ENCODE measurements at regions of chr9 and their contacts with region 1.

Region 1: DNA sequence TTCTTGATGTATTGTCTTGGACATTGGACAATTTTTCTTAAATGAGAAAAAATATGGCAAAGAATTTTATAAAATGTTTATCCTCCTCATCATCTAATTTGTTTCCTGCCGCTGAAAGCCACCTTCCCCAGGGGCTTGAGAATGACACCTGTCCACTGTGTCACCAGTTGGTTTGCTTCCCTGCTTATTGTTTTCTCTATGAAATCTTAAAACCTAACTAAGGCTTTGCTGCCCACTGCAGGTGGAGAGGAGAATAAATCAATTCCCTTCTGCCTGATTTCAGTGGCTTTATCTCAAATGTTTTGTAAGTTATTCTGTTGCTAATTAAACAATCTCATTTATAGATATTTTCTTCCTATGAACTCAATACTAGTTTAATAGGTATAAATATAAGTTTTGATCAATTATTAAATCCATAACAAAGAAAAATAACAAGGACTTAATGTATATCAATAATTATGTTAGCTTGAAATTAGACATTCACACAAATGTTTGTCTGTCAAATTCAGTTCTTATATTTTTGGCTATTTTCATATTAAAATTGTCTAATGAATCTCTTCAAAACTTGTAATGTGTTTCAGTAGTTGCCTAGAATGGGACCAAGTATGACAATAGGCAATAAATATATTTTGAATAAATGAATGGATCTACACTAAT is 822.5 kb downstream of the PTPRD start:
- DNase-seq: no peak
- H3K4me3 ChIP-seq: no peak overlapping the region
- H3K27ac ChIP-seq: no peak overlapping the region
- H3K4me1 ChIP-seq: no peaks in the 10 kb centered on the region
- H3K27me3 ChIP-seq: no peaks in the 10 kb centered on the region
- CTCF ChIP-seq: peak in 2 of 3 experiments; percentile 59 to 73; a peak in 3 of 4 replicates
- EP300 ChIP-seq: no peak
- POLR2A ChIP-seq: no peak
- RAD21 ChIP-seq: peak; percentile 89 to 92

Region 2: GRCh38 chr9:9605681-9606080 is 184.7 kb before region 1 on chr9:
- CTCF ChIA-PET with region 1: interaction called, 68 read pairs
- POLR2A ChIA-PET with region 1: no interaction called
- DNase-seq: no peak
- H3K4me3 ChIP-seq: no peak overlapping the region
- H3K27ac ChIP-seq: no peak overlapping the region
- H3K4me1 ChIP-seq: peaks cover 0 to 4% (median 1%) of the 10 kb centered on the region in 4 experiments; a peak in 3 of 7 replicates
- H3K27me3 ChIP-seq: no peaks in the 10 kb centered on the region
- CTCF ChIP-seq: no peak
- EP300 ChIP-seq: no peak
- POLR2A ChIP-seq: no peak
- RAD21 ChIP-seq: no peak

Region 3: DNA sequence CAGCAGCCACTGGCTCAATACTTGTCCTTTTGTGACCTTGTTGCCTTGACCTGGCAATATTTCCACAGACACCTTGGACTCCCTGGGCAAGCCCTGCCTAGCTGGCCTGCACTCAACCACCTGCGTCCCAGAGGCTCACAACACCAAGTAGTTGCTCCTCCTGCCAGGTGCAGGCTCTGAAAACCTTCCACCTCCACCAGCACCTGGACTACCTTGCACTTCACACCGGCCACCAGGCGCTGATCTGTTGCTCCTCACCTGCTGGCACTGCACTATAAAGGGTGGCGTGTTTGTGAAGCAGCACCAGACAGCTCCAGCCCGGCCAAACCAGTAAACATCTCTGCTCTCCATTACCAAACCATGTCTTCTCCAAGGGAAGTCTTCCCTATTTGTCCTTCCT is 175.3 kb before region 1 on chr9:
- CTCF ChIA-PET with region 1: interaction called, 13 read pairs
- POLR2A ChIA-PET with region 1: no interaction called
- DNase-seq: no peak
- H3K4me3 ChIP-seq: no peak overlapping the region
- H3K27ac ChIP-seq: no peak overlapping the region
- H3K4me1 ChIP-seq: no peaks in the 10 kb centered on the region
- H3K27me3 ChIP-seq: no peaks in the 10 kb centered on the region
- CTCF ChIP-seq: no peak
- EP300 ChIP-seq: no peak
- POLR2A ChIP-seq: no peak
- RAD21 ChIP-seq: no peak

Region 4: DNA sequence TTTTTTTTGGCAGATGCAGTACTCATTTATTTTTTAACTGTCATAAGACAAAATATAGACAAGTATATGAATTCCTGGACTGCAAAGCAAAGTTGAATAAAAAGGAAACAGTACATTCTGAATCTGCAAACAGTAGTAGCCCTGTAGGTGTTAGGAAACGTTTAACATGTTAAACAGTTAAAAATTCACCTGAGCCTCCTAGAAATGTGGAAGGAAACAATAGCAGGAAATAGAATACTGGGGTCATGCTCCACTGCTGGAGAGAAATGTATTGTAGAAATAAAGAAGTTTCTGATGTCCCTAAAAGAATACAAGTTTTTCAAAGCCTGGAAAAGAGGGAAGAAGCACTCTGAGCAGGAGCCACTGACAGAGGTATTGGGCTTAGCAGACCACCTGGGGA is 43.5 kb before region 1 on chr9:
- CTCF ChIA-PET with region 1: no interaction called
- POLR2A ChIA-PET with region 1: no interaction called
- DNase-seq: no peak
- H3K4me3 ChIP-seq: no peak overlapping the region
- H3K27ac ChIP-seq: no peak overlapping the region
- H3K4me1 ChIP-seq: no peaks in the 10 kb centered on the region
- H3K27me3 ChIP-seq: no peaks in the 10 kb centered on the region
- CTCF ChIP-seq: no peak
- EP300 ChIP-seq: no peak
- POLR2A ChIP-seq: no peak
- RAD21 ChIP-seq: no peak

Region 5: DNA sequence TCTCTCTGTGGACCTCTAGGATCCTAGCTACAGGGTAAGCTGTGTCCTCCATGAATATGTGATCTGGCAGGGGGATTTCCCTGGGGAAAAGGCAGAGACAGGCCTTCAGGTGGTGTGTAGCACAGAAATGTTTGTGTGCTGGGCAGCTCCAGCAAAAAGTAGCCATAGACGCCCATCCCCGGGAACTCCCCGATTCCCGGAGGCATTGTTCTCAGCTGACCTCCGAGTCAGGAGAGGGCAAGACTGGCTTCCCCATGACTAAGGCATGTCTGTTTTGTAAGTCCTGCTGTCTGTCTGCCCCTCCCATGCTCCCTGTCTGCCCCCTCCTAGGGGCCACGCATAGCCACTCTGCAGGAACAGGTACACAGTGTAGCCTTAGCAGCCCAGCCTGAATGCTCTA is 12.1 kb before region 1 on chr9:
- CTCF ChIA-PET with region 1: interaction called, 23 read pairs
- POLR2A ChIA-PET with region 1: no interaction called
- DNase-seq: no peak
- H3K4me3 ChIP-seq: no peak overlapping the region
- H3K27ac ChIP-seq: no peak overlapping the region
- H3K4me1 ChIP-seq: no peaks in the 10 kb centered on the region
- H3K27me3 ChIP-seq: no peaks in the 10 kb centered on the region
- CTCF ChIP-seq: no peak
- EP300 ChIP-seq: no peak
- POLR2A ChIP-seq: no peak
- RAD21 ChIP-seq: no peak

Region 6: GRCh38 chr9:9820436-9820835 is 30.1 kb after region 1 on chr9:
- CTCF ChIA-PET with region 1: no interaction called
- POLR2A ChIA-PET with region 1: no interaction called
- DNase-seq: no peak
- H3K4me3 ChIP-seq: no peak overlapping the region
- H3K27ac ChIP-seq: no peak overlapping the region
- H3K4me1 ChIP-seq: no peaks in the 10 kb centered on the region
- H3K27me3 ChIP-seq: no peaks in the 10 kb centered on the region
- CTCF ChIP-seq: no peak
- EP300 ChIP-seq: no peak
- POLR2A ChIP-seq: no peak
- RAD21 ChIP-seq: no peak

Region 7: DNA sequence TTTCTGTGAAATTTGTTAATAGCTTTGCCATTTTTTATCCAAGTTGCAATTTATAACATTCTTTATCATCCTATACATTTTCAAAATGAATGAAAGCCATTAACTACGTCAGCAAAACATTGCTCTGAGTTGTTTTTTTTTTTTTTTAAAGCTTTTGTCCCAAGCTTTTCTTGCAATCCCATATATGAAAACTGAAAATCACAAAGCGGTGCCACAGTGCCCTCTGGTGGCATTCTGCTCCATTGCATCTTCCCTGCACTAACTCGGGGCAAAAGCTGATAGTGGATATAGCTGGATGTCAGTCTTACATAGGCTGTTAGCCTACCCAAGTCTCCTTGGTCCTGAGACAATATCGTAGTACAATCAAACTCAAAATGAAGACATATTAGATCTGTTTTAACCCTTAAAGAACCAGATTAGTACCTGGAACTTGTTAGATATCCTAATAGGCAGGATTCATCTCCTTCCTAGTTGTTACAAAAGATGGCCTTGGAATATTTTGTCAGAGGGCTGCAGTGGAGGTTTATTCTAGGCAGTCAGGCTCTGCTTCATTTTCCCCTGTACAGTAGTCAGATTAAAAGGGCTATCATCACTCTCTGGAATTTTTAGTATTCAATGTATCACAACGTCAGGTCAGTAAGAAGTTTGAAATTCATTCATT is 152.6 kb after region 1 on chr9:
- CTCF ChIA-PET with region 1: interaction called, 52 read pairs
- POLR2A ChIA-PET with region 1: no interaction called
- DNase-seq: peak; percentile 70 to 89
- H3K4me3 ChIP-seq: no peak overlapping the region
- H3K27ac ChIP-seq: no peak overlapping the region
- H3K4me1 ChIP-seq: no peaks in the 10 kb centered on the region
- H3K27me3 ChIP-seq: no peaks in the 10 kb centered on the region
- CTCF ChIP-seq: peak; percentile 74 to 86 (median 74)
- EP300 ChIP-seq: no peak
- POLR2A ChIP-seq: no peak
- RAD21 ChIP-seq: peak; percentile 89 to 93

Measured in H1 (cell line).